B cell (primary cell): ENCODE measurements at regions of chr9 and their contacts with region 1.

Region 1: GRCh38 chr9:37575921-37576721 is at the start of gene FBXO10:
- DNase-seq: peak; percentile 75
- ATAC-seq: peak; percentile 73
- H3K4me3 ChIP-seq: peak within 1 kb of the TSS; percentile 64 to 95 (median 92)
- H3K4me3 Mint-ChIP-seq: peak within 1 kb of the TSS; percentile 98
- H3K27ac ChIP-seq: peak within 1 kb of the TSS; percentile 81 to 86
- H3K27ac Mint-ChIP-seq: peak within 1 kb of the TSS; percentile 96
- H3K4me1 ChIP-seq: peaks cover 17 to 27% of the 10 kb centered on the region in 2 donors
- H3K4me1 Mint-ChIP-seq: peaks cover 56% of the 10 kb centered on the region
- H3K27me3 ChIP-seq: no peaks in the 10 kb centered on the region
- H3K27me3 Mint-ChIP-seq: no peaks in the 10 kb centered on the region
- CTCF ChIP-seq: no peak
- total RNA-seq, gene FBXO10: 67.3 and 68.0 TPM in 2 replicates

Region 2: GRCh38 chr9:37528652-37529510 is 47.2 kb before region 1 on chr9:
- CTCF ChIA-PET with region 1: interaction called, 3 read pairs
- POLR2A ChIA-PET with region 1: interaction called, 5 read pairs
- intact Hi-C with region 1: loop called (anchors 1 kb)
- DNase-seq: peak; percentile 82
- ATAC-seq: peak; percentile 80
- H3K4me3 ChIP-seq: no peak overlapping the region
- H3K4me3 Mint-ChIP-seq: peak overlapping the region; percentile 78
- H3K27ac ChIP-seq: peak overlapping the region in 1 of 2 donors; percentile 39
- H3K27ac Mint-ChIP-seq: peak overlapping the region; percentile 84
- H3K4me1 ChIP-seq: peaks cover 0 to 28% of the 10 kb centered on the region in 2 donors
- H3K4me1 Mint-ChIP-seq: peaks cover 37% of the 10 kb centered on the region
- H3K27me3 ChIP-seq: no peaks in the 10 kb centered on the region
- H3K27me3 Mint-ChIP-seq: no peaks in the 10 kb centered on the region
- CTCF ChIP-seq: no peak

Region 3: GRCh38 chr9:37565661-37566618 is 10.2 kb before region 1 on chr9:
- CTCF ChIA-PET with region 1: interaction called, 25 read pairs
- POLR2A ChIA-PET with region 1: interaction called, 20 read pairs
- intact Hi-C with region 1: loop called (anchors 1 kb)
- DNase-seq: peak; percentile 73
- ATAC-seq: peak; percentile 94
- H3K4me3 ChIP-seq: peak overlapping the region in 3 of 5 experiments; percentile 9 to 52 (median 33)
- H3K4me3 Mint-ChIP-seq: peak overlapping the region; percentile 83
- H3K27ac ChIP-seq: peak overlapping the region; percentile 70
- H3K27ac Mint-ChIP-seq: peak overlapping the region; percentile 94
- H3K4me1 ChIP-seq: peaks cover 59 to 76% of the 10 kb centered on the region in 2 donors
- H3K4me1 Mint-ChIP-seq: peaks cover 78% of the 10 kb centered on the region
- H3K27me3 ChIP-seq: no peaks in the 10 kb centered on the region
- H3K27me3 Mint-ChIP-seq: no peaks in the 10 kb centered on the region
- CTCF ChIP-seq: no peak

Region 4: DNA sequence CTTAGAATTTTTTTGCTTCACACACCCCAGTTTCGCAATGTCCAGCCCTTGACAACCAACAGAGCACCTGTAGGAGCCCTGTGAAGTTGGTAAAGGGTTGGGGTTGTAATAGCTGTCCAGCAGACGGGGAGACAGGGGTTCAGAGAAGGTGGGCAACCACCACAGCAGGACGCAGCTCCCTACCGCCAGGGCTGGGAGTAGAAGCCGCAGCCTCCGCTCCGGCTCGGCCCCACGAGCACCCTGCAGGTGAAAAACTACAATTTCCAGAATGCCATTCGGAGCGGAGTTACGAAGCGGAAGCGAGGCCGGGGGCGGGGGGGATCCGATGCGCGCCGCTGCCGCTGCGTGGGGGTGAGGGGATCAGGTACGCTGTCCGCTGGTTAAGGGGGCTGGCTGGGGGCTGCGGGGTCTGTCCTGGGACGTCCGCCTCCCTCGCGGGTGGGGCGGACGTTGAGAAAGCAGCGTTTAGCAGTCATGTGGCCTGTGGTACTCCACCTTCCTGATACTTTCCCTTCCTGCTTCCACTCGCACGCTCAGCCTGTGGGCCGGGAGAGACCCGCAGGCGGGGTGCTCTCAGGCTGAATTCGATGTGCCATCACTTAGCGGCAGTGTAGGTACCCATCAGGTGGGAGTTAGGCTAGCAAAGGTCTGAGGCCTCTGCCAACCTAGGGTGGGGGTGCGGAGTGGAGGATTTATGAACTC is 177.5 kb after region 1 on chr9 and contains the start of gene TRMT10B:
- CTCF ChIA-PET with region 1: no interaction called
- POLR2A ChIA-PET with region 1: no interaction called
- intact Hi-C with region 1: loop called (anchors 5 kb)
- DNase-seq: peak; percentile 83
- ATAC-seq: peak; percentile 90
- H3K4me3 ChIP-seq: peak within 1 kb of the TSS; percentile 48 to 96 (median 84)
- H3K4me3 Mint-ChIP-seq: peak within 1 kb of the TSS; percentile 98
- H3K27ac ChIP-seq: peak within 1 kb of the TSS; percentile 80 to 81
- H3K27ac Mint-ChIP-seq: peak within 1 kb of the TSS; percentile 93
- H3K4me1 ChIP-seq: peaks cover 14 to 16% of the 10 kb centered on the region in 2 donors
- H3K4me1 Mint-ChIP-seq: peaks cover 23% of the 10 kb centered on the region
- H3K27me3 ChIP-seq: no peaks in the 10 kb centered on the region
- H3K27me3 Mint-ChIP-seq: no peaks in the 10 kb centered on the region
- CTCF ChIP-seq: no peak
- total RNA-seq, gene TRMT10B: 27.8 and 28.4 TPM in 2 replicates